Right ventricle myocardium superior (tissue), 1 donor: ENCODE measurements at regions of chr5 and their contacts with region 1.

Region 1: GRCh38 chr5:137743031-137743640 is 7.2 kb upstream of the KLHL3 start:
- DNase-seq: no peak
- ATAC-seq: peak; percentile 80

Region 2: DNA sequence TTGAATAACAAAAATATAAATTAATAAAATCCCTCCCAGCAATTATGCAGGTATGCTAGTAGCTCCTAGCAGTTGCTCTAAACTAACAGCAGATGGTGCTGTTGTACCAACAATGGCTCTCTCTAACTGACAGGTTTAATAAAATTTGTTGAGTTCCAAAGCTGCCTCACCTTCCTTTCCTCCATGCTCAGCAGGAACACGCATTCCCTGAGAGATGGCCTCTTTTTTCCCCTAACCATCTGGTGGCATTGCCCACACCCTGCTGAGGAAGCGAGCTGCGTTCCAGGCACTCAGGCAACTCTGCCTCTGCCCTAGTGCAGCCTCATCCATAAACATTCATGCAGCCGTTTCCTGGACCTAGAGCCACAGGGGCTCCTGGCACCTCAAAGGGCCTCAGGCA is 113.5 kb before region 1 on chr5:
- intact Hi-C with region 1: loop called (anchors 2 kb)
- DNase-seq: no peak
- ATAC-seq: peak; percentile 76

Region 3: GRCh38 chr5:137660349-137660817 is 82.8 kb before region 1 on chr5:
- intact Hi-C with region 1: loop called (anchors 2 kb)
- DNase-seq: peak; percentile 54
- ATAC-seq: peak; percentile 86

Region 4: GRCh38 chr5:138274189-138274853 is 531.2 kb after region 1 on chr5 and contains the start of gene GFRA3:
- intact Hi-C with region 1: no loop called
- DNase-seq: no peak
- ATAC-seq: peak; percentile 31
- total RNA-seq, gene GFRA3: 0.94 TPM